CD8-positive, alpha-beta memory T cell (primary cell): ENCODE measurements at regions of chr12 and their contacts with region 1.

Region 1: GRCh38 chr12:53267999-53268647 is at the start of gene ESPL1:
- DNase-seq: peak; percentile 75 to 88 (median 84)
- H3K4me3 ChIP-seq: peak within 1 kb of the TSS; percentile 83
- H3K4me3 Mint-ChIP-seq: peak within 1 kb of the TSS; percentile 88 to 99 (median 94)
- H3K27ac ChIP-seq: peak within 1 kb of the TSS; percentile 67
- H3K27ac Mint-ChIP-seq: peak within 1 kb of the TSS; percentile 52 to 99 (median 90)
- H3K4me1 ChIP-seq: peaks cover 13% of the 10 kb centered on the region
- H3K4me1 Mint-ChIP-seq: peaks cover 16 to 21% (median 20%) of the 10 kb centered on the region in 3 donors
- H3K27me3 ChIP-seq: no peaks in the 10 kb centered on the region
- H3K27me3 Mint-ChIP-seq: no peaks in the 10 kb centered on the region
- total RNA-seq, gene ESPL1: 58.4 to 63.4 TPM

Region 2: DNA sequence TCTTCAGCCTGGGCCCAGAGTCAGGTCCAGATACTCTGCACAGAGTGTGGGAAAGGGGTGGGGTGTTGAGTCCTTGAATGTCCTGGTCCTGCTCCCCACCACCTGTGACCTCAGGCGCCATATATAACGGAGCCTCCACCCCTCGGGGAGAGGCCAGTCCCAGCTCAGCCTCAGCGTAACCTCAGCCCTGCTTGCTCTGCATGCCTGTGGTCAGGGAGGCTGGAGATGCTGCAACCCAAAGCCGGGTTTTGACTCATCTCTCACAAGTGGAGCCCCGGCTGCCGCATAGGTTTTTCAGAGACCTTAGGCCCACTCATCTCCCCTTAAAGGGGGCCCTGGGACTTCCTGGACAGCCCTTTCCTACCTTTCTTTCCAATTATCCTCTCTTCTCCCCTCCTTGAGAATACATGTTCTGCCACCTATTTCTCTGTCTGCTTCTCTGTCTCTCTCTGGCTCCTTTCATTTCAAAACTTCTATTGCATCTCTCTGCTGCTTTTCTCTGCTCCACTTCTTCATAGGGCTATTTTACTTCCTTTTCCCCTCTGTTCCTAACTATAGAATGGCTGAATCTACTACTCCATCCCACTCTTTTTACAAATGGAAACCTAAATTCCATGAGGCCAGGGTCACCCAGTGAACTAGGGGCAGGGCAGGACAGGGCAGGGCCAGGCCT is 62.2 kb before region 1 on chr12:
- CTCF ChIA-PET with region 1: interaction called, 165 read pairs
- POLR2A ChIA-PET with region 1: interaction called, 5 read pairs
- DNase-seq: peak in 3 of 5 donors; percentile 32 to 80 (median 42)
- H3K4me3 ChIP-seq: peak overlapping the region; percentile 93
- H3K4me3 Mint-ChIP-seq: peak overlapping the region; percentile 83 to 98 (median 89)
- H3K27ac ChIP-seq: peak overlapping the region; percentile 55
- H3K27ac Mint-ChIP-seq: peak overlapping the region; percentile 85 to 99 (median 90)
- H3K4me1 ChIP-seq: peaks cover 81% of the 10 kb centered on the region
- H3K4me1 Mint-ChIP-seq: peaks cover 70 to 94% (median 84%) of the 10 kb centered on the region in 3 donors
- H3K27me3 ChIP-seq: no peaks in the 10 kb centered on the region
- H3K27me3 Mint-ChIP-seq: peaks cover 0 to 1% of the 10 kb centered on the region in 2 donors

Region 3: DNA sequence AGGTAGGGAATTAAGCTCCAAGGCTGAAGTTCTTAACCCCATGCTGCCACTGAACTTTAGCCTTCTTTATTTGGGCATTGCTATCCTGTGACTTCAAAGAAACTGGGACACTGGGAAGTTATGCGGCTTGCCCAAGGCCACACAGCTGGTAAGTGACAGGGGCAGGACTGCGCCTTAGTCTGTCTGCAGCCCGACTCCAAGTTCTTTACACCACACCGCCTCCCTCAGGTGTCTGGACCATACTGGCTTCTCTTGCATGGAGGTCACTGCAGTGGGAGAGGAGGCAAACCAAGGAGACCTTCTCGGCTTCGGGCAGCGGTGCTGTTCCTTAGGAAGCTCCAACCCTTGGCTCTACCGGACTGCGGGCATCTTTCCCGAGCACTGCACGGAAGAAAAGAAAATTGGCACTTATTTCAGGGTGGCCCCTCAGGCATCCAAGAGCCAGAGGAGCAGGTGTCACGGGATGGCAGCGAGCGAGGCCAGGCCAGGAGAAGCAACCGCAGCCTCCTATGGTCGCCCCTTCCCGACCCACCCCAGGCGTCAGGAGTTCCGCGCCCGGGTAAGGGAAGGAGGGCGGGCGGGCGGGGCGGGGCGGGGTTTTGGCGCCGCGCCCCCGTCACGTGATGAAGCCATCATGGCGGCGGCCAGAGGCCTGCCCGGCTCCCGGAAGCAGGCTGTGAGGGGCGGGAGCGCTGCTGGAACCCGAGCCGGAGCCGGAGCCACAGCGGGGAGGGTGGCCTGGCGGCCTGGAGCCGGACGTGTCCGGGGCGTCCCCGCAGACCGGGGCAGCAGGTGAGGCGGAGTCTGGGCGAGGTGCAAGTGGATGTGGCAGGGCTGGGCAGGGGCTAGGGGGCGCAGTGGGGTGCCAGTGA is 16.4 kb before region 1 on chr12:
- CTCF ChIA-PET with region 1: interaction called, 11 read pairs
- POLR2A ChIA-PET with region 1: interaction called, 5 read pairs
- DNase-seq: peak; percentile 68 to 84 (median 69)
- H3K4me3 ChIP-seq: peak overlapping the region; percentile 83
- H3K4me3 Mint-ChIP-seq: peak overlapping the region; percentile 97 to 99 (median 99)
- H3K27ac ChIP-seq: peak overlapping the region; percentile 73
- H3K27ac Mint-ChIP-seq: peak overlapping the region; percentile 90 to 100 (median 98)
- H3K4me1 ChIP-seq: peaks cover 41% of the 10 kb centered on the region
- H3K4me1 Mint-ChIP-seq: peaks cover 32 to 46% (median 46%) of the 10 kb centered on the region in 3 donors
- H3K27me3 ChIP-seq: no peaks in the 10 kb centered on the region
- H3K27me3 Mint-ChIP-seq: peaks cover 0 to 1% of the 10 kb centered on the region in 2 donors

Region 4: GRCh38 chr12:53287741-53288216 is 19.7 kb after region 1 on chr12:
- CTCF ChIA-PET with region 1: interaction called, 47 read pairs
- POLR2A ChIA-PET with region 1: no interaction called
- DNase-seq: peak; percentile 57 to 84 (median 63)
- H3K4me3 ChIP-seq: no peak overlapping the region
- H3K4me3 Mint-ChIP-seq: no peak overlapping the region
- H3K27ac ChIP-seq: no peak overlapping the region
- H3K27ac Mint-ChIP-seq: peak overlapping the region in 4 of 8 donors; percentile 37 to 78 (median 70)
- H3K4me1 ChIP-seq: no peaks in the 10 kb centered on the region
- H3K4me1 Mint-ChIP-seq: peaks cover 4 to 5% (median 5%) of the 10 kb centered on the region in 3 donors
- H3K27me3 ChIP-seq: no peaks in the 10 kb centered on the region
- H3K27me3 Mint-ChIP-seq: no peaks in the 10 kb centered on the region

Region 5: GRCh38 chr12:53295070-53295890 is 27.2 kb after region 1 on chr12 and contains the start of gene PFDN5:
- CTCF ChIA-PET with region 1: interaction called, 47 read pairs
- POLR2A ChIA-PET with region 1: interaction called, 11 read pairs
- DNase-seq: peak; percentile 72 to 93 (median 87)
- H3K4me3 ChIP-seq: peak within 1 kb of the TSS; percentile 90
- H3K4me3 Mint-ChIP-seq: peak within 1 kb of the TSS; percentile 97 to 100 (median 100)
- H3K27ac ChIP-seq: peak within 1 kb of the TSS; percentile 87
- H3K27ac Mint-ChIP-seq: peak within 1 kb of the TSS; percentile 93 to 100 (median 99)
- H3K4me1 ChIP-seq: peaks cover 41% of the 10 kb centered on the region
- H3K4me1 Mint-ChIP-seq: peaks cover 43 to 53% (median 47%) of the 10 kb centered on the region in 3 donors
- H3K27me3 ChIP-seq: no peaks in the 10 kb centered on the region
- H3K27me3 Mint-ChIP-seq: no peaks in the 10 kb centered on the region
- total RNA-seq, gene PFDN5: 380 to 385 TPM

Region 6: DNA sequence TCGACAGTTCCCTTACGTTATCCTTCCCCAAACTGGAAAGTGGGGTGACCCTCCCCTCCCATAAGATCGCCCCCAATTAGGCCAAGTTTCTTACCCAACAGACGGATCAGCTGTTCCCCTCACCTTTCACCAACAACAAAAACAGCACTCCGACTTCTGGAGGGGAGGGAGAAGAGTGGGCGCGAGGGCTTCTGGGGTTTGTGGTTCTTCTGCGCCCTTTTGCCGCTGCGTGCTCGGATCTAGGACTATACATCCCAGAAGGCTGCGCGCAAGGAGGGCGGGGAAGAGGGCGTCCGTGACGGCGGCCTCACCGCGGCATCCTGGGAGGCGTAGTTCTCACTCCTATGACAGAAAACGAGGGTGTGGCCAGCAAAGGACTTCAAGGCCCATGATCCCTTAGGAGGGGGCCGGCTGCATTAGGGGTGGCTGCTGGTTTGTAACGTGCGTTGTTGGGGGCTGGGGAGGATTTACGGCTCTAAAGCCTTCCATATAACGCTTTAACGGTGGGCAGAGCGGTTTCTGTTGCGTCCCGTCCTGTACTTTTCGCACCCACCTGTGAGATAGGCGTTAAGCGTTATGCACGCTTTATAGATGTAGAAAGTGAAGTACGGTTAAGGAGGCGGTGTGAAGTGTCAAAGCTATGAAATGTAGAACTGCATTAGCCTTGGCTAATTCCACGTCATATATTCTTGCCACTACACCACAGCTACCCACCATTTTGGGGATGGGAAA is 459.4 kb after region 1 on chr12 and contains the start of gene CALCOCO1:
- CTCF ChIA-PET with region 1: no interaction called
- POLR2A ChIA-PET with region 1: no interaction called
- DNase-seq: peak; percentile 94 to 97 (median 96)
- H3K4me3 ChIP-seq: peak within 1 kb of the TSS; percentile 97
- H3K4me3 Mint-ChIP-seq: peak within 1 kb of the TSS; percentile 89 to 97 (median 94)
- H3K27ac ChIP-seq: peak within 1 kb of the TSS; percentile 64
- H3K27ac Mint-ChIP-seq: peak within 1 kb of the TSS; percentile 49 to 98 (median 92)
- H3K4me1 ChIP-seq: peaks cover 23% of the 10 kb centered on the region
- H3K4me1 Mint-ChIP-seq: peaks cover 28 to 45% (median 39%) of the 10 kb centered on the region in 3 donors
- H3K27me3 ChIP-seq: no peaks in the 10 kb centered on the region
- H3K27me3 Mint-ChIP-seq: peaks cover 3 to 7% of the 10 kb centered on the region in 2 donors
- total RNA-seq, gene CALCOCO1: 29.5 to 31.4 TPM